Calu3 (cell line): ENCODE measurements at regions of chr16 and their contacts with region 1.

Region 1: GRCh38 chr16:22023505-22023904 is 15.6 kb downstream of the MOSMO start:
- DNase-seq: no peak
- H3K4me3 Mint-ChIP-seq: no peak overlapping the region
- H3K27ac Mint-ChIP-seq: no peak overlapping the region
- H3K4me1 Mint-ChIP-seq: peaks cover 75% of the 10 kb centered on the region
- H3K27me3 Mint-ChIP-seq: no peaks in the 10 kb centered on the region
- CTCF ChIP-seq: no peak

Region 2: DNA sequence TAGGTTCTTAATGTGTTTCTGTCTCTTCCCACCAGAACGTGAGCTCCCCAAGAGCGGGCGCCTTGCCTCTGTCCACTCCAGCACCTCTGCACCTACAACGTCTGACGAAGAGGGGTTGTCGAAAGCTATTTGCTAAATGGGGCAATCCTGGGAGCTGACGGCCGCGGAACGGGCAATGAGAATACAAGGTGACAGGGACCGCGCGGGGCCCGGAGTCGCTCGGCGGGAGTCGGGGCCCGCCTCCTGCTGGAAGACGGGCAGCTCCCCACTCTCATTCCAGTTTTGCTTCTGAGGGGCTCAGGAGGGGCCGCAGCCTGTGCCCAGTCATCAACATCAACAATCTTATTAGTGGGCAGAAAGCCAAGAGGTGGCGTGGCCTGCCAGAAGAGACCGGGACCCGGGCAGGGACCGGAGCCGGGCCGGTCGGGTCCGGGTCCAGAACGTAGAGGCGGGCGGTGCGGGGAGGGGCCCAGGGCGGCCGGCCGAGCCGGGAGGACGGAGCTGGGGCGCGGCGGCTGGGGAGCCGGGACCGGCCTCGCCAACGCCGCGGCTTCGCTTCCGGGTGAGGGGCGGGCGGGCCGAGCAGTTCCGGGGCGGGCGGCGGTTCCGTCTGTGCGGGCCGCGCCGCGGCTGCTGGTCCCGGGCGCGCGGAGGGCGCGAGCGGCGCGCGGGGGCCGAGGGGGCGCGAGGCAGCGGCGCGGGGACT is 15.8 kb before region 1 on chr16 and contains the start of gene MOSMO:
- CTCF ChIA-PET with region 1: interaction called, 14 read pairs
- intact Hi-C with region 1: loop called (anchors 2 kb)
- DNase-seq: peak; percentile 78
- H3K4me3 Mint-ChIP-seq: peak within 1 kb of the TSS; percentile 80
- H3K27ac Mint-ChIP-seq: peak within 1 kb of the TSS; percentile 66
- H3K4me1 Mint-ChIP-seq: peaks cover 37% of the 10 kb centered on the region
- H3K27me3 Mint-ChIP-seq: no peaks in the 10 kb centered on the region
- CTCF ChIP-seq: no peak
- total RNA-seq, gene MOSMO: 24.0 and 30.1 TPM in 2 replicates

Region 3: GRCh38 chr16:22013486-22013885 is 10.0 kb before region 1 on chr16:
- CTCF ChIA-PET with region 1: interaction called, 14 read pairs
- intact Hi-C with region 1: loop called (anchors 2 kb)
- DNase-seq: no peak
- H3K4me3 Mint-ChIP-seq: no peak overlapping the region
- H3K27ac Mint-ChIP-seq: no peak overlapping the region
- H3K4me1 Mint-ChIP-seq: peaks cover 55% of the 10 kb centered on the region
- H3K27me3 Mint-ChIP-seq: no peaks in the 10 kb centered on the region
- CTCF ChIP-seq: no peak